ENCODE measurements at regions of chr11 and their contacts with region 1.

Region 1: DNA sequence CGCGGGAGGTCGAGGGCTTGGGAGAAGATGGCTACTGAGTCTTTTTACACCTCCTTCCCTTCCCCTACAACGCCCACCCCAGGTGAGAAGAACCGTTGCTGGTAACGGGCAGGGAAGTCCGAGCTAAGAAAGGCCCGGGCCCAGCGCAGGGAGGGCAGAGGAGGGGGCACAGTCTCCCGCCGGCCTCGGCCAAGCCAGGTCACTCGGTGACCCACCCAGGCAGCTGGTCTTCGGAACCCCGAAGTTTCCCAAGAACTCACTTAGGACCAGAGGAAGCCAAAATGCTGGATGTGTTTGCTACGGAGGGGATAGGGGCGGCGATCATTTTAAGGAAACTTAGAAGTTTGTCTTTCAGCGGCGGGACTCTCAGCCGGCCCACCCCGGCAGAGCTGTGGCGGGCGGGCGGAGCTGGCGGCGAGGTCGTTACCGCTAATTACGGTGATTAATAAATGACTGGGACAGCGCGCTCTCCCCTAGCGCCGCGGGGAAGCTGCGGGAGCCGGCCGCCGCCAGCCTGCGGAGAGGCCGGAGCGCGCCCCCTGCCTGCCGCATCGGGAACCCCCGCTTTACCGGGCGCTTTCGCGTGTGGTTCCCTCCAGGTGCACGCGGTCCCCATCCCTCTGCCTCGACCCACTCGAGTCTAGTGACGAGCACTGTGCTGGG is 820 bp downstream of the ROBO3 start:
- DNase-seq: peak; percentile 43
- ATAC-seq: peak; percentile 28
- H3K4me3 Mint-ChIP-seq: no peak overlapping the region
- H3K27ac Mint-ChIP-seq: no peak overlapping the region
- H3K4me1 Mint-ChIP-seq: peaks cover 30% of the 10 kb centered on the region
- H3K27me3 Mint-ChIP-seq: peaks cover 85% of the 10 kb centered on the region
- CTCF ChIP-seq: no peak

Region 2: GRCh38 chr11:124415356-124415923 is 450.6 kb before region 1 on chr11:
- CTCF ChIA-PET with region 1: no interaction called
- POLR2A ChIA-PET with region 1: no interaction called
- intact Hi-C with region 1: loop called (anchors 10 kb)
- DNase-seq: no peak
- ATAC-seq: no peak
- H3K4me3 Mint-ChIP-seq: no peak overlapping the region
- H3K27ac Mint-ChIP-seq: no peak overlapping the region
- H3K4me1 Mint-ChIP-seq: no peaks in the 10 kb centered on the region
- H3K27me3 Mint-ChIP-seq: peaks cover 15% of the 10 kb centered on the region
- CTCF ChIP-seq: no peak

Region 3: DNA sequence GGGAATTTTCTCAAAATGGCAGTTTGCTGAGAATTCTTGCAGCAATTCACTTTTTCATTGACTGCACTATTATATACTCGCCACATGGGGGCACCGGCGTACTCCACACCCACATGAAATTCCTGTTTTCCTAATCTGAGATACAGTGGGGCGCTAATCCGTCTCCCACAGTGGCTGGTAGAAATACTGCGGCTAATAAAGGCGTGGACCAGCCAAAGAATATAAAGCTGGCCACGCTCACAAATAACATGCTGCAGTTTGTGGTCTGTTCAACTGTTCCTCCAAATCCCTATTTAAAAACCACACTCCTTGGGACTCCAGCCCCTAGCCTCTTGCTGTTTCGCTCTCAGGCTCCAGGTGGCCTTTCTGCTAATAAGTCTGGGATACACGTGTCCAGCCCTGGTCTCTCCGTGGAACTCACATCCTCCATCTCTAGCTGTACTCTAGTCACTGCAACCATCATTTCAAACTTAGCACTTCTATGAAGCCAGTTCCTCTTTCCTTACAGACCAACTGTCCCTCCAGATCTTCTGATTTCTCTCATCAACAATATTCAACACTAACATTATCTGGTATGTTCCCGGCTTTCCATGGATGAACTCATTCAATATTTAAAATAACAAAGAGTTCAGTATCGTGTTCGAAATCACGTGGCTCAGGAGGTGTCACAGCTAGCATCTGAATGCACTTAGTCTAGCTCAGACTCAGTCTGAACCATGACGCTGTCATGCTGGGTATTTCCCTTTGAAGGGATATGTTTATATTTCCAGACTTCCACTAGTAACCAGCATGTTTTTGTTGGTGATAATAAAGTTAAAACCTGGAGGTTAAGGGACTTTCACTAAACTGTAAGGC is 221.4 kb before region 1 on chr11:
- CTCF ChIA-PET with region 1: interaction called, 6 read pairs
- POLR2A ChIA-PET with region 1: no interaction called
- intact Hi-C with region 1: loop called (anchors 1 kb)
- DNase-seq: no peak
- ATAC-seq: peak; percentile 79
- H3K4me3 Mint-ChIP-seq: no peak overlapping the region
- H3K27ac Mint-ChIP-seq: no peak overlapping the region
- H3K4me1 Mint-ChIP-seq: peaks cover 18% of the 10 kb centered on the region
- H3K27me3 Mint-ChIP-seq: no peaks in the 10 kb centered on the region
- CTCF ChIP-seq: peak; percentile 87

Measured in activated B cell treated with CpG ODN at 0.5 μM for 24 hours (primary cell).